ENCODE measurements at regions of chr16 and their contacts with region 1.

Region 1: GRCh38 chr16:69186642-69187445 is at the start of gene SNTB2:
- DNase-seq: peak; percentile 94
- H3K4me3 ChIP-seq: peak within 1 kb of the TSS; percentile 79
- H3K27ac ChIP-seq: peak within 1 kb of the TSS; percentile 83
- H3K4me1 ChIP-seq: peaks cover 28% of the 10 kb centered on the region
- H3K27me3 ChIP-seq: no peaks in the 10 kb centered on the region
- CTCF ChIP-seq: no peak
- total RNA-seq, gene SNTB2: 49.3 and 49.4 TPM in 2 replicates

Region 2: DNA sequence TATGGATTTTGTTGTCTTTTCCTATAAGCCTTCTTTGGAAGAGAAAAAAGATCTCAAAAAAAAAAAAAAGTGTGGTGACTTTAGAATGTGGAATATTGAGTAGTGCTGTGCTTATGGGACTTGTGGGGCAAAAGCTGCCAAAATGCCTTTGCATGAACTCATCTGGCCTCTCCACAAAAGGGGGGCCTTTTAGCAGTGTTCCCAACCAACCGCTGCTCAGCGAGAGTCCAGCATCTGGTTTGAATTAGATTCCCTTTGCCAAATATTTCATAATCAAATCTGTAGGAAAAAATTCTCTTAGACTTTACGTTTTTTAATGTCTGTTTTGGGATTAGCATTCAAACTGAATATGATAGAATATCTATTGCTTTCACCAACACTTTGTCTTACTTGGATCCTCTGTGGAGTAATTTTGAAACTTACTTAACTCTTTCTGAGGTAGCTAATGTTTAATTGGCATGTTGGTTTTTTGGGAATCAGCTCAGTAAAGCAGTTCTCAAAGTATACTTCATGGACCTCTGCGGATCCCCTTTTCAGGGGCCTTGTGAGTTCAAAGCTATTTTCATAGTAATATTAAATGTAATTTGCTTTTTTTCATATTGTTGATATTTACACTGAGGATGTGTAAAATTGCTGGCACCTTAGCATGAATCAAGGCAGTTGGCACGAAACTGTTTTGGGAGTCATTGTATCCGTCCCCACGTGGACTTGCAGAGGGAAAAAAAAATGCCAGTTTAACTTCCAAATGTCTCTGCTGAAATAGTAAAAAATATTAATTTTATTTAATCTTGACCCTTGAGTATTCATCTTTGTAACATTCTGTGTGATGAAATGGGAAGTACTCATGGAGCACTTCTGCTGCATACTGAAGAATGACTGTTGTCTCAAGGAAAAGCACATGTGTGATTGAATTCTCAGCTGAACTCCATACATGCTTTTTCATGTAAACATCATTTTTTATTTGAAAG is 89.6 kb after region 1 on chr16:
- CTCF ChIA-PET with region 1: no interaction called
- POLR2A ChIA-PET with region 1: no interaction called
- intact Hi-C with region 1: loop called (anchors 5 kb)
- DNase-seq: peak; percentile 82
- H3K4me3 ChIP-seq: peak overlapping the region; percentile 4
- H3K27ac ChIP-seq: peak overlapping the region; percentile 77
- H3K4me1 ChIP-seq: peaks cover 32% of the 10 kb centered on the region
- H3K27me3 ChIP-seq: no peaks in the 10 kb centered on the region
- CTCF ChIP-seq: no peak